H1 (cell line): ENCODE measurements at regions of chrX and their contacts with region 1.

Region 1: GRCh38 chrX:109840585-109840984 is 107.5 kb upstream of the ACSL4 start:
- DNase-seq: no peak
- H3K4me3 ChIP-seq: no peak overlapping the region
- H3K27ac ChIP-seq: no peak overlapping the region
- H3K4me1 ChIP-seq: peaks cover 0 to 4% (median 0%) of the 10 kb centered on the region in 4 experiments; a peak in 1 of 7 replicates
- H3K27me3 ChIP-seq: no peaks in the 10 kb centered on the region
- CTCF ChIP-seq: no peak
- EP300 ChIP-seq: no peak
- POLR2A ChIP-seq: no peak
- RAD21 ChIP-seq: no peak

Region 2: GRCh38 chrX:109643687-109644086 is 196.9 kb before region 1 on chrX:
- CTCF ChIA-PET with region 1: no interaction called
- POLR2A ChIA-PET with region 1: no interaction called
- DNase-seq: no peak
- H3K4me3 ChIP-seq: no peak overlapping the region
- H3K27ac ChIP-seq: no peak overlapping the region
- H3K4me1 ChIP-seq: no peaks in the 10 kb centered on the region
- H3K27me3 ChIP-seq: no peaks in the 10 kb centered on the region
- CTCF ChIP-seq: no peak
- EP300 ChIP-seq: no peak
- POLR2A ChIP-seq: no peak
- RAD21 ChIP-seq: no peak

Region 3: GRCh38 chrX:109714340-109714958 is 126.1 kb before region 1 on chrX:
- CTCF ChIA-PET with region 1: interaction called, 26 read pairs
- POLR2A ChIA-PET with region 1: no interaction called
- DNase-seq: no peak
- H3K4me3 ChIP-seq: no peak overlapping the region
- H3K27ac ChIP-seq: no peak overlapping the region
- H3K4me1 ChIP-seq: no peaks in the 10 kb centered on the region
- H3K27me3 ChIP-seq: no peaks in the 10 kb centered on the region
- CTCF ChIP-seq: no peak
- EP300 ChIP-seq: no peak
- POLR2A ChIP-seq: no peak
- RAD21 ChIP-seq: no peak

Region 4: GRCh38 chrX:109797311-109797975 is 43.1 kb before region 1 on chrX:
- CTCF ChIA-PET with region 1: no interaction called
- POLR2A ChIA-PET with region 1: no interaction called
- DNase-seq: no peak
- H3K4me3 ChIP-seq: no peak overlapping the region
- H3K27ac ChIP-seq: no peak overlapping the region
- H3K4me1 ChIP-seq: no peaks in the 10 kb centered on the region
- H3K27me3 ChIP-seq: no peaks in the 10 kb centered on the region
- CTCF ChIP-seq: no peak
- EP300 ChIP-seq: no peak
- POLR2A ChIP-seq: no peak
- RAD21 ChIP-seq: no peak